ENCODE measurements at regions of chr15 and their contacts with region 1.

Region 1: DNA sequence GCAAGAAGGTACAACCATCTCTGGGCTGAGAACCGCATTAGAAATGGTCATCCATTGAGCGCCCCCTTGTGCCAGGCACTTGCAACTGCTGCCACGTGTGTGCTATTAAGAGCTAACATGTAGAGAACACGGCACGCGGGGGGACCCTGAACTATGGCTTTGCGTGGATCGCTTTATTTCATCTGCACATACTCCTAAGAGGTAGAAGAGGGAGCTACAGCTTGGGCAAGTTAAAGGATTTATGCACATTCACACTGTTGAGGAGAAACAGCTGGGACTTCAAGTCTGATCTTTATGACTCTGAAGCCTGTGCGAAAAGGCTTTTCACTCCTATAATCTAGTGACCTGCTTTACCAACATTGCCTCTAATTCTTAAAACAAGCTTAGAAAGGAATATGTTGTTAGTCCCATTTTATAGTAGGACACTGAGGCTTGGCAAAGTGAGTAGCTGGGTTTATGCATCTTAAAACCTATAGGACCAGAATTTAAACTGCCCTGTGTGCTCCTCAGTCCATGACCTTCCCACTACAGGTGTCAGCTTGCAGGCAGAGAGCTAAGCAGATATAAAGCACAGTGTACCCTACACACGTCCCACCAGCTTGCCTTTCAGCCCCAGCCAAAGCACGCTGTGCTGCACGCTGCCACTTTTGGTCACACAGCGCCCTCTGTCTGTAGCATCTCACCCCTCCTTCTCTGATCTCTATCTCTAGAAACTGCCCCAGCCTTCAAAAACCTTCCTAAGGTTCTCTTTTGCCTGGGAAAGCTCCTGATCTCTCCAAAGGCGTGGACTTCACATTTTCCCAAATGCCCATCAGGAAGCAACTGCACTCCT is 57.8 kb downstream of the STARD5 start:
- DNase-seq: peak; percentile 71
- H3K4me3 Mint-ChIP-seq: peak overlapping the region; percentile 30
- H3K27ac Mint-ChIP-seq: peak overlapping the region; percentile 56
- H3K4me1 Mint-ChIP-seq: peaks cover 36% of the 10 kb centered on the region
- H3K27me3 Mint-ChIP-seq: peaks cover 14% of the 10 kb centered on the region

Region 2: GRCh38 chr15:80776420-80777045 is 489.6 kb before region 1 on chr15:
- intact Hi-C with region 1: loop called (anchors 5 kb)
- DNase-seq: peak; percentile 51
- H3K4me3 Mint-ChIP-seq: no peak overlapping the region
- H3K27ac Mint-ChIP-seq: no peak overlapping the region
- H3K4me1 Mint-ChIP-seq: peaks cover 9% of the 10 kb centered on the region
- H3K27me3 Mint-ChIP-seq: peaks cover 42% of the 10 kb centered on the region

Region 3: DNA sequence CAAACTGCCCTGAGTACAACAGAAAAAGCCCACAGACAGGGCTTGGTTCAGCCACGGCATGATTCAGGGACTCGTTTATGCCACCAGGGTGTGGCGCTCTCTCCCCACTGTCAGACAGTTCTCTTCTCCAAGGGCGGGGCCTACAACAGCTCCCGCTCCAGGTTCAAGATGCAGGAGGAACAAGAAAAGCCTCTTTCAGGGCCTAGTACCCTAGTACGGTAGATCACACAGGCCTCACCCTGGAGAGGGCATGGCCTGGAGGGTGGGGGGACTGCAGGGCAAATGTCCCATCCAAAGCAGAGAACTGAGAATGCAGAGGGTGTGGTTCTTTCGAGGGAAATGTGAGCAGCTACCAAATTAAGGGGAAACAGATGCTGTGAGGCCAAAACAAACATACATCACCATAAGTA is 288.5 kb before region 1 on chr15:
- intact Hi-C with region 1: loop called (anchors 1 kb)
- DNase-seq: peak; percentile 8
- H3K4me3 Mint-ChIP-seq: no peak overlapping the region
- H3K27ac Mint-ChIP-seq: peak overlapping the region; percentile 8
- H3K4me1 Mint-ChIP-seq: peaks cover 44% of the 10 kb centered on the region
- H3K27me3 Mint-ChIP-seq: no peaks in the 10 kb centered on the region

Region 4: GRCh38 chr15:81106560-81106959 is 159.6 kb before region 1 on chr15:
- intact Hi-C with region 1: loop called (anchors 1 kb)
- DNase-seq: peak; percentile 24
- H3K4me3 Mint-ChIP-seq: no peak overlapping the region
- H3K27ac Mint-ChIP-seq: no peak overlapping the region
- H3K4me1 Mint-ChIP-seq: peaks cover 22% of the 10 kb centered on the region
- H3K27me3 Mint-ChIP-seq: peaks cover 32% of the 10 kb centered on the region

Region 5: GRCh38 chr15:81400640-81401236 is 134.6 kb after region 1 on chr15:
- intact Hi-C with region 1: loop called (anchors 2 kb)
- DNase-seq: no peak
- H3K4me3 Mint-ChIP-seq: no peak overlapping the region
- H3K27ac Mint-ChIP-seq: no peak overlapping the region
- H3K4me1 Mint-ChIP-seq: no peaks in the 10 kb centered on the region
- H3K27me3 Mint-ChIP-seq: peaks cover 5% of the 10 kb centered on the region

Measured in activated T-helper 1 cell treated with anti-CD3 and anti-CD28 coated beads, Interleukin-12 subunit alpha, Interleukin-12 subunit beta, Interleukin-2, Interleukin-4 antibody, amounts not matched to agents 30 ng/mL and 10 ng/mL and 1 ng/mL, durations not matched to agents 14 hours and 24 hours and 36 hours (primary cell).